ENCODE measurements at regions of chr15 and their contacts with region 1.

Region 1: GRCh38 chr15:33872416-33873106 is 95.7 kb upstream of the CHRM5 start:
- DNase-seq: no peak

Region 2: GRCh38 chr15:33894193-33894592 is 21.6 kb after region 1 on chr15:
- intact Hi-C with region 1: loop called in 1 of 2 experiments (anchors 1 kb)
- DNase-seq: no peak

Region 3: DNA sequence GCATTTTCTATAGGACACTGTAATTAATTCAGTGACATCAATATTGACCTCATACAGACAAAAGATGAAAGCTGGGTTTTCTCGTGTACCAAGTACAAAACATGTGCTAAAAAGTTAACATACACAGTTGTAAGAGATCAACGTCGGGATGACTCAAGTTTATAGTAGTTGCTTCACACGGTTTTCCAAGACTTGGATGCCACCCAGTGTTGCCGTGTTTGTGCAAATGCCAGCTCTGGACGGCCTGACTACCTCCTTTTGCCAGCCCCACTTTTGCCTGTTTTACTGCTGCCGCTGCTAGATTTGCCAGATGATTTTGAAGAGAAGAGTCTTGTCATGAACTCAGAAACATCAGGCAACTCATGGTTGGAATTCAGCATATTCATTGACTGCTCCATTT is 211.5 kb after region 1 on chr15:
- intact Hi-C with region 1: no loop called
- DNase-seq: no peak